Ovary (tissue), 10 donors: ENCODE measurements at regions of chr11 and their contacts with region 1.

Region 1: GRCh38 chr11:59802639-59803176 is 7.9 kb downstream of the MRPL16 start:
- DNase-seq: peak in 2 of 5 donors; percentile 16 to 24
- H3K4me3 ChIP-seq: no peak overlapping the region
- H3K27ac ChIP-seq: no peak overlapping the region
- H3K4me1 ChIP-seq: no peaks in the 10 kb centered on the region
- H3K27me3 ChIP-seq: no peaks in the 10 kb centered on the region
- CTCF ChIP-seq: peak; percentile 38 to 60 (median 55)
- EP300 ChIP-seq: no peak
- POLR2A ChIP-seq: no peak

Region 2: GRCh38 chr11:59753650-59754493 is 48.8 kb before region 1 on chr11:
- intact Hi-C with region 1: loop called (anchors 2 to 10 kb)
- DNase-seq: peak; percentile 82 to 91 (median 87)
- H3K4me3 ChIP-seq: peak overlapping the region; percentile 73
- H3K27ac ChIP-seq: peak overlapping the region in 1 of 2 donors; percentile 95
- H3K4me1 ChIP-seq: peaks cover 6% of the 10 kb centered on the region
- H3K27me3 ChIP-seq: no peaks in the 10 kb centered on the region
- CTCF ChIP-seq: peak; percentile 79 to 98 (median 86)
- EP300 ChIP-seq: no peak
- POLR2A ChIP-seq: no peak